Panc1 (cell line): ENCODE measurements at regions of chr7 and their contacts with region 1.

Region 1: GRCh38 chr7:14888962-14889361 is 13.6 kb downstream of the DGKB start:
- DNase-seq: no peak
- ATAC-seq: no peak
- H3K4me3 ChIP-seq: no peak overlapping the region
- H3K27ac ChIP-seq: no peak overlapping the region
- H3K4me1 ChIP-seq: no peaks in the 10 kb centered on the region
- H3K27me3 ChIP-seq: no peaks in the 10 kb centered on the region
- CTCF ChIP-seq: no peak

Region 2: GRCh38 chr7:14988941-14989340 is 100.0 kb after region 1 on chr7:
- CTCF ChIA-PET with region 1: no interaction called
- POLR2A ChIA-PET with region 1: no interaction called
- in situ Hi-C with region 1: no loop called
- intact Hi-C with region 1: no loop called
- DNase-seq: no peak
- ATAC-seq: no peak
- H3K4me3 ChIP-seq: no peak overlapping the region
- H3K27ac ChIP-seq: no peak overlapping the region
- H3K4me1 ChIP-seq: no peaks in the 10 kb centered on the region
- H3K27me3 ChIP-seq: no peaks in the 10 kb centered on the region
- CTCF ChIP-seq: no peak

Region 3: DNA sequence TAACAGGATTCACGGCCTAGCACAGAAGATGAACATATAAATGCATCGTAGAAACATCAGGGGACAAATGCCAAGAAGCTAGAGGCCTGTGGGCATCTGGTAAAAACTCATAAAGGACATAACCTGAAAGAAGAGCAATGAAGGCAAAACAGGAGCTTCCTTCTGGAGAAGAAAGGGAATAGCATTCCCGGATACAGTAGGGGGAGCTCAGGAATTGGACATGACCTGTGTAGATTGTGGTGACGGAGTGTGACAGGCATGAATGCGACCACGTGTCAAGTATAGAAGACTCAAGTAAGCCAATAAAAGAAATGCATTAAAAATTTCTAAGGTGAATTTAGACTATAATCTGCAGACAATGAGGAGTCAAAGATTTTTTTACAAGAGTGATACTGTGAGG is 402.7 kb after region 1 on chr7:
- CTCF ChIA-PET with region 1: interaction called, 13 read pairs
- POLR2A ChIA-PET with region 1: no interaction called
- in situ Hi-C with region 1: no loop called
- intact Hi-C with region 1: no loop called
- DNase-seq: no peak
- ATAC-seq: no peak
- H3K4me3 ChIP-seq: no peak overlapping the region
- H3K27ac ChIP-seq: no peak overlapping the region
- H3K4me1 ChIP-seq: no peaks in the 10 kb centered on the region
- H3K27me3 ChIP-seq: no peaks in the 10 kb centered on the region
- CTCF ChIP-seq: peak; percentile 13; the same call in 1 of the 2 replicates